ENCODE measurements at regions of chr7 and their contacts with region 1.

Region 1: DNA sequence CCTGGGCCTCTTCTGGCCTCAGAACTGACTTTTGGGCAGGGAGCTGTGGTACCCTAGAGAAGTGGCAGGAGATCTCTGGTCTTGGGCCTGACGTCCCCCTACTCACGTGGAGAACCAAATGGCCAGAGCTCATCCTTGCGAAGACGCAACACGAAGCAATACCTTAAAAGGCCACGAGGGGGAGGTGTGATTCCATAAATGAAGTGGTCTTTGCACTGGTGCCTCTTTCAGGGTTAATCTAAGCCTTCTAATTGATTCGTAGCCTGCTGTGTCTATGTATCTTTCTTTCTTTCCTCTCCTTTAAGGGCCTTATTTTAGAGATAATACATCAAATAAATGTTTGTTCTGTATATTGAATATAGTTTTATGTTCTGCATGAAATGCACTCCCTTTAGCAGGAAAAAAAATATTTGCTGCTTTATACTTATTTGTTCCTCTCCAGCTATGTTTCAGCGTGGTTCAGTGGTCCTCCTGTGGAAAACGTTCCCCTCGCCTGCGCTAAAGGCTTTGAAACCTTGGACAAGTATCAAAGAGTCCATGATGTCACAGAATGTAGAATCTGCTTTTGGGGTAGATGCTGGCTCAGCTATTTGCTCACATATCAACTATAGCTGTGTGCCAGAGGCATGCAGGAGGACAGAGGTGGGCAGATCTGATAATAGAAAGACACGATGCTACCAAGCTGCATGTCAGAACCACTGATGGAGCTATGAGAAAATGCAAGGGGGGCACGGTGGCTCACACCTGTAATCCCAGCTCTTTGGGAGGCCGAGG is 41.0 kb downstream of the STRA8 start:
- DNase-seq: peak; percentile 69 to 80 (median 72)
- ATAC-seq: peak; percentile 55
- H3K4me3 ChIP-seq: no peak overlapping the region
- H3K27ac ChIP-seq: no peak overlapping the region
- H3K4me1 ChIP-seq: no peaks in the 10 kb centered on the region
- H3K27me3 ChIP-seq: no peaks in the 10 kb centered on the region
- CTCF ChIP-seq: peak; percentile 49 to 84 (median 74)
- POLR2A ChIP-seq: no peak

Region 2: DNA sequence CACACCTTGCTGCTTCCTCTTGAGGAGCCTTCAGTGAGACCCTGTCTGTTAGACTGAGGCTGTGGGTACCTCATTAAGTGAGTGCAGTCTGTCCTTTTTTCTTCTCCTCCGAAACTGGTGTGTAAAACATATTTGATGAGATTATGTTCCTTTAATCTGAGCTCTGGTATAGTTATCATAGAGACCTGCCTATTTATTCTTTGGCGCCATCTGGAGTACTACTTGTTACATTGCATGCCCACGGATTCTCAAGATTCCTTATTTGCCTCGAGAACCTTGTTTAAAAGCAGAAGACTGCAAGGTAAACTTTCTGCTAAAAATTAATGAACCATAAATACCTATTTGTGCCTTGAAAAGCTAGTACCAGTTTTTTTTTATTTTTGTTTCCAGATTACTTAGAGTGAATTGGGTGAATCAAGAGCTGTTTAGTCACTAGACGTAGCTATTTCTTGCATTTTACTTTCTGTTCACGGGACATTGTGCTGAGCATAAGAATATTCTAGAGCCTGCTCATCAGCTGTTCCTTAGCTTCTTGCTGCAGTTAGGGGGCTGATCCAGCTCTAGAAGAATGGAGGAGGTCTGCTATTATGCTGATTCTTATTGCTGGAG is 370.7 kb after region 1 on chr7:
- intact Hi-C with region 1: loop called (anchors 10 kb)
- DNase-seq: peak in 1 of 4 donors; percentile 31
- ATAC-seq: peak; percentile 59
- H3K4me3 ChIP-seq: no peak overlapping the region
- H3K27ac ChIP-seq: no peak overlapping the region
- H3K4me1 ChIP-seq: no peaks in the 10 kb centered on the region
- H3K27me3 ChIP-seq: no peaks in the 10 kb centered on the region
- CTCF ChIP-seq: peak; percentile 25 to 72 (median 66)
- POLR2A ChIP-seq: no peak

Measured in body of pancreas (tissue), 4 donors.